Breast epithelium (tissue), 4 donors: ENCODE measurements at regions of chr19 and their contacts with region 1.

Region 1: GRCh38 chr19:7778081-7778480 is 15.0 kb downstream of the CLEC4M start:
- DNase-seq: no peak
- H3K4me3 ChIP-seq: no peak overlapping the region
- H3K27ac ChIP-seq: no peak overlapping the region
- H3K4me1 ChIP-seq: no peaks in the 10 kb centered on the region
- H3K27me3 ChIP-seq: peaks cover 0 to 16% of the 10 kb centered on the region in 2 donors
- CTCF ChIP-seq: no peak
- POLR2A ChIP-seq: no peak

Region 2: GRCh38 chr19:7729216-7729615 is 48.9 kb before region 1 on chr19:
- intact Hi-C with region 1: no loop called
- DNase-seq: no peak
- H3K4me3 ChIP-seq: no peak overlapping the region
- H3K27ac ChIP-seq: no peak overlapping the region
- H3K4me1 ChIP-seq: no peaks in the 10 kb centered on the region
- H3K27me3 ChIP-seq: peaks cover 5 to 55% of the 10 kb centered on the region in 2 donors
- CTCF ChIP-seq: no peak
- POLR2A ChIP-seq: no peak

Region 3: DNA sequence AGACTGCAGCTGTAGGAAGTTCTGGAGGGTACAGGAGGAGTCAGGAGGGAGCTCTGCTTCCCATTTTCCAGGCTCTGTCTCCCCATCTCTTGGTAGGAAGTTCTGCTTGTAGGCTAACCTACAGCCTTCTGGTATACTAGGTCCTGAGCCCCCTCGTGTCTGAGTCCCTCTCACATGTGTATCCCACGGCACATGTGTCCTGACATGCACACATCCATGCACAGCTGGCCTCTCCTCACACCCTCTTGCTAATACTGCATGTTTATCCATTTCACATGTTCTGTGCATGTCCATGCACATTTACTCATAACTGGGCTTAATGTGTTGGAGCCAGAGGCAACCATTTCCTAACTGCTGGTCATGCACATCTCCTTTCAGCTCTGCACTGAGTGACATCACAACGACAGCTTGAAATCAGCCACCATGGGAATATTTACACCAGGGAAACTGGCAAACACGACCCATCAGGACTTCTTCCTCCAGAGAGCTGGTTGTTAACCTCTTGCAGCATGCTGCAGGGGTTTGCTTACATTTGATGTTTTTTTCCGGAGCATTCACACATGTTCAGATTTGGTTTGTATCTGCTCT is 33.8 kb before region 1 on chr19:
- intact Hi-C with region 1: loop called (anchors 1 kb)
- DNase-seq: no peak
- H3K4me3 ChIP-seq: no peak overlapping the region
- H3K27ac ChIP-seq: no peak overlapping the region
- H3K4me1 ChIP-seq: no peaks in the 10 kb centered on the region
- H3K27me3 ChIP-seq: peaks cover 0 to 42% of the 10 kb centered on the region in 2 donors
- CTCF ChIP-seq: no peak
- POLR2A ChIP-seq: no peak